PC-3 (cell line): ENCODE measurements at regions of chr1 and their contacts with region 1.

Region 1: GRCh38 chr1:168863772-168864171 is 134.8 kb upstream of the DPT start:
- DNase-seq: no peak
- ATAC-seq: no peak
- H3K4me3 ChIP-seq: no peak overlapping the region
- H3K27ac ChIP-seq: no peak overlapping the region
- H3K4me1 ChIP-seq: peaks cover 24% of the 10 kb centered on the region
- H3K27me3 ChIP-seq: no peaks in the 10 kb centered on the region
- CTCF ChIP-seq: no peak

Region 2: GRCh38 chr1:168609133-168609715 is 254.5 kb before region 1 on chr1:
- CTCF ChIA-PET with region 1: no interaction called
- POLR2A ChIA-PET with region 1: no interaction called
- intact Hi-C with region 1: loop called (anchors 5 kb)
- DNase-seq: peak; percentile 34
- ATAC-seq: no peak
- H3K4me3 ChIP-seq: no peak overlapping the region
- H3K27ac ChIP-seq: no peak overlapping the region
- H3K4me1 ChIP-seq: peaks cover 8% of the 10 kb centered on the region; the same call in 1 of the 2 replicates
- H3K27me3 ChIP-seq: no peaks in the 10 kb centered on the region
- CTCF ChIP-seq: no peak

Region 3: DNA sequence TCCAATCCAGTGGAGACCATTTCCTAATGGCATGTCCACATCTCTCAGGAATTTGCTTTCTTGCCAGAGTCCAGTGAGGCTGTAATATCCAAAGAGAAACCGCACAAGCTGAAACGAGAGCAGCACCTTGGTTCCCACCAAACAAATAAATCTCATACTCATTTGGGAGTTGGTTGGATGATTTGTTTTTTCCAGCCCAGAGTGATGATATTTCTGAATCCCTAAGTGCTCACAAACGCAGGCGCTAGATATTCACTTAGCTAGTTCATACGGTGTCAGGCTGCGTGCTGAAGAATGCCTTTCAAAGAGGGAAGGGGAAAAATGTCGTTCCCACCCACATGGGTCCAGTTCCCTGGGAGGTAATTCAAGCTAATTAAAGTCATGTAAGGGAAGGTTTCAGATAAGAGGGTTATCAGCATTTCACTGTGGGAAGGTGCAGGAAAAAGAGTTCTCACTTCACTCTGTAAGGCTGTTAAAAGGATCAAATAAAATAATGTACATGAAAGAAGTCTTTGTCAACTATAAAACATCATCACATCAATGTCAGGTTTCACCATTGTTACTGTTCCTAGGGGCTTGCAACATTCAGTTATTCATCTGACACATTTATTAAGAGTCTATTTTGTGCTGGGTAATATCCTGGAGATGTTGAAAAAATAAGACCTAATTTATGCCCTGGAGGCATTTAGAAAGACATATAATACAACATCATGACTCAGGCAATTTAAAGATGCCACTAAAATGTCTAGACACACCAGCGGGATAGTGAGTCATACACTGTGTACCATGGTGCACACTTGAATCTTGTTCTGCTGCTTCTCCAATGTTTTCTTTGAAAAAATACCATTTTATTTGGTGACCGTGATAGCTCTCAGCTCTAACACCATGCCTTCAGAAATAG is 154.1 kb before region 1 on chr1:
- CTCF ChIA-PET with region 1: no interaction called
- POLR2A ChIA-PET with region 1: no interaction called
- intact Hi-C with region 1: loop called (anchors 1 kb)
- DNase-seq: peak; percentile 99
- ATAC-seq: peak; percentile 83
- H3K4me3 ChIP-seq: peak overlapping the region; percentile 43
- H3K27ac ChIP-seq: peak overlapping the region; percentile 98
- H3K4me1 ChIP-seq: peaks cover 27% of the 10 kb centered on the region
- H3K27me3 ChIP-seq: no peaks in the 10 kb centered on the region
- CTCF ChIP-seq: no peak

Region 4: GRCh38 chr1:168760241-168760640 is 103.5 kb before region 1 on chr1:
- CTCF ChIA-PET with region 1: no interaction called
- POLR2A ChIA-PET with region 1: no interaction called
- intact Hi-C with region 1: no loop called
- DNase-seq: no peak
- ATAC-seq: no peak
- H3K4me3 ChIP-seq: no peak overlapping the region
- H3K27ac ChIP-seq: no peak overlapping the region
- H3K4me1 ChIP-seq: no peaks in the 10 kb centered on the region
- H3K27me3 ChIP-seq: no peaks in the 10 kb centered on the region
- CTCF ChIP-seq: no peak

Region 5: DNA sequence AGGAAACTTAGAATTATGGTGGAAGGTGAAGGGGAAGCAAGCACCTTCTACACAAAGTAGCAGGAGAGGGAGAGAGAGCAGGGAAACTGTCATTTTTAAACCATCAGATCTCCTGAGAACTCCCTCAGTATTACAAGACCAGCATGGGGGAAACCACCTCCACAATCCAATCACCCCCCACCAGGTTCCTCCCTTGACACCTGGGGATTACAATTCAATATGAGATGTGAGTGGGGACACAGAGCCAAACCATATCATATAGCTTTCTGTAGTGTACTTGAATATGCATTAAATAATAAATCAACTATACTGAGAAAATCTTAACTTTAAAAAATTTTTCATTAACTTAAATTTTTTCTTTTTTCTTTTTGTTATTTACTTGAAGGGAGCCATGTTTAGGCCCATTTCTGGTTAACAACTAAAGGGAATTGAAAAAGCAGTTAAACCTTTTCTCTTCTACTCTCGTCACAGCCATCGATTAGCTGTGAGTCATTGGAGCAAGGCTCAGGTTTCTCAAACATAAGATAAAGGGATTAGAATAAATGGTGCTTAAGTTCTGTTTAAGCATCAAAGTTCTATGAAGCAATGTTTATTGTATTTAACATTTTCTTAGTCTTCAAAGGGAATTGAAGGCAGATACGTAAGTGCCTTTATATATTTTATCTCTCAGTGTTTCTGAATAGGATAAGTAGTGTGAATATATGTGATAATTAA is 62.6 kb before region 1 on chr1:
- CTCF ChIA-PET with region 1: no interaction called
- POLR2A ChIA-PET with region 1: no interaction called
- intact Hi-C with region 1: loop called (anchors 2 kb)
- DNase-seq: peak; percentile 66
- ATAC-seq: peak; percentile 81
- H3K4me3 ChIP-seq: no peak overlapping the region
- H3K27ac ChIP-seq: no peak overlapping the region
- H3K4me1 ChIP-seq: peaks cover 9% of the 10 kb centered on the region; the same call in 1 of the 2 replicates
- H3K27me3 ChIP-seq: no peaks in the 10 kb centered on the region
- CTCF ChIP-seq: no peak

Region 6: DNA sequence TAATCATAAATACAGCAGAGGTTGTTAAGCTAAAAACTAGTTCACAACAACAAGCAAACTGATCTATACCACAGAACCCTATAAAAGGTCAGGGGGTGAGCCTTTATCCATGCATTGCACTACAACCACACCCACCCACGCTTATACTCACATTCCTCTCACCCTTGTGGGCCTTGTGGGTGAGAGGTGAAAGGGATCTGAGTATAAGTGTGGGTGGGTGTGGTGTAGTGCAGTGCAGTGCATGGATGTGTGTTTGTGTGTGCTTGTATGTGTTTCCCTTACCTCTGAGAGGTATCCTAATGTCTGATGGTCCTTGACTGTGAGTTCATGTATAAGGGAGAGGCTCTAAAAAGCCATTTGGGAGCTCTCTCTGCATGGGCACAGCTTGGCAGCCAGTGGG is 39.4 kb before region 1 on chr1:
- CTCF ChIA-PET with region 1: no interaction called
- POLR2A ChIA-PET with region 1: no interaction called
- intact Hi-C with region 1: no loop called
- DNase-seq: no peak
- ATAC-seq: no peak
- H3K4me3 ChIP-seq: no peak overlapping the region
- H3K27ac ChIP-seq: no peak overlapping the region
- H3K4me1 ChIP-seq: peaks cover 7% of the 10 kb centered on the region; the same call in 1 of the 2 replicates
- H3K27me3 ChIP-seq: no peaks in the 10 kb centered on the region
- CTCF ChIP-seq: no peak

Region 7: GRCh38 chr1:168907053-168907452 is 43.3 kb after region 1 on chr1:
- CTCF ChIA-PET with region 1: interaction called, 4 read pairs
- POLR2A ChIA-PET with region 1: no interaction called
- intact Hi-C with region 1: loop called (anchors 2 kb)
- DNase-seq: peak; percentile 99
- ATAC-seq: peak; percentile 86
- H3K4me3 ChIP-seq: peak overlapping the region; percentile 36; the same call in 1 of the 2 replicates
- H3K27ac ChIP-seq: peak overlapping the region; percentile 95
- H3K4me1 ChIP-seq: peaks cover 48% of the 10 kb centered on the region
- H3K27me3 ChIP-seq: no peaks in the 10 kb centered on the region
- CTCF ChIP-seq: no peak

Region 8: DNA sequence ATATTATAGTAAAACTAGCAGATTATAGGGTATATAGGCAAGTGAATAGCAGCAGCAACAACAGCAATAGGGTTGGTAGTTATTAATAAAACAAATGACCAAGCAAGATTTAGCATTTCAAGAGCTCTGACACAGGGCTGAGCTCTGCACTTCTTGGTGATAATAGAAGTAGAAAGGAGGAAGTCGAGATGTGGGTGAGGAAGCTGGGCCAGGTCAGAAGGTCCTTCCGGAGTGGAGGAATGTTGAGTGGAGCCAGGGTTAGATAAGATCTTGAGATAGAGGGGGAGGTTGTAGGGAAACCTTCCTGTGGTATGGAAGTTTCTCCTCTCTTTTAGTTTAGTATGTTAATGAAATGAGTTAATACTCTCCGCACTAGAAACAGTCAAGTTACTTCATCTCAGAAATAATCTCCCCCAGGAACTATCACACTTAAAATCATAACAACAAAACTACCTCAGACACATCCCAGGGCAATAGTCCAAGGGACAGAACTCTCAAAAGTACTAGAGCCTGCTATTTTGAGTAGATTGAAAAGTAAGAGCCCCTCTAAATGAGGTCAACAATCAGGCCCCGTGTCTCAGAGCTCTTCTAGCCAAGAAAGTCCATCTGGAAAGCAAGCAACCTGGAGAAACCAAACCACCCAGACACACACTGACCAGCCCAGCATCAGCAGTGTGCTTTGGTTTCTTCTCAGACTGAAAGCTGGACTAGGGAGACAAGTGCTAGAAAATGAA is 197.3 kb after region 1 on chr1:
- CTCF ChIA-PET with region 1: no interaction called
- POLR2A ChIA-PET with region 1: no interaction called
- intact Hi-C with region 1: loop called (anchors 1 kb)
- DNase-seq: peak; percentile 66
- ATAC-seq: peak; percentile 10
- H3K4me3 ChIP-seq: peak overlapping the region; percentile 8; the same call in 1 of the 2 replicates
- H3K27ac ChIP-seq: peak overlapping the region; percentile 93
- H3K4me1 ChIP-seq: peaks cover 34% of the 10 kb centered on the region
- H3K27me3 ChIP-seq: no peaks in the 10 kb centered on the region
- CTCF ChIP-seq: no peak